CD14-positive monocyte (primary cell): ENCODE measurements at regions of chr9 and their contacts with region 1.

Region 1: GRCh38 chr9:105168870-105169319 is 75.6 kb upstream of the SLC44A1 start:
- DNase-seq: no peak
- H3K4me3 ChIP-seq: no peak overlapping the region
- H3K4me3 Mint-ChIP-seq: no peak overlapping the region
- H3K27ac ChIP-seq: no peak overlapping the region
- H3K27ac Mint-ChIP-seq: no peak overlapping the region
- H3K4me1 ChIP-seq: no peaks in the 10 kb centered on the region
- H3K4me1 Mint-ChIP-seq: peaks cover 1% of the 10 kb centered on the region
- H3K27me3 ChIP-seq: no peaks in the 10 kb centered on the region
- H3K27me3 Mint-ChIP-seq: peaks cover 0 to 3% (median 3%) of the 10 kb centered on the region in 3 donors
- CTCF ChIP-seq: no peak

Region 2: GRCh38 chr9:104780799-104781395 is 388.0 kb before region 1 on chr9:
- intact Hi-C with region 1: loop called in 1 of 2 experiments (anchors 10 kb)
- DNase-seq: peak; percentile 54 to 79 (median 72)
- H3K4me3 ChIP-seq: no peak overlapping the region
- H3K4me3 Mint-ChIP-seq: peak overlapping the region in 1 of 2 donors; percentile 39
- H3K27ac ChIP-seq: peak overlapping the region in 1 of 2 donors; percentile 74
- H3K27ac Mint-ChIP-seq: peak overlapping the region; percentile 77 to 91 (median 88)
- H3K4me1 ChIP-seq: peaks cover 34 to 45% of the 10 kb centered on the region in 2 donors
- H3K4me1 Mint-ChIP-seq: peaks cover 22% of the 10 kb centered on the region
- H3K27me3 ChIP-seq: no peaks in the 10 kb centered on the region
- H3K27me3 Mint-ChIP-seq: no peaks in the 10 kb centered on the region
- CTCF ChIP-seq: peak; percentile 81